AG04449 (cell line): ENCODE measurements at regions of chr2 and their contacts with region 1.

Region 1: GRCh38 chr2:217934321-217935131 is 68.3 kb downstream of the TNS1 start:
- DNase-seq: peak; percentile 89
- H3K4me3 ChIP-seq: peak overlapping the region; percentile 1
- CTCF ChIP-seq: no peak

Region 2: DNA sequence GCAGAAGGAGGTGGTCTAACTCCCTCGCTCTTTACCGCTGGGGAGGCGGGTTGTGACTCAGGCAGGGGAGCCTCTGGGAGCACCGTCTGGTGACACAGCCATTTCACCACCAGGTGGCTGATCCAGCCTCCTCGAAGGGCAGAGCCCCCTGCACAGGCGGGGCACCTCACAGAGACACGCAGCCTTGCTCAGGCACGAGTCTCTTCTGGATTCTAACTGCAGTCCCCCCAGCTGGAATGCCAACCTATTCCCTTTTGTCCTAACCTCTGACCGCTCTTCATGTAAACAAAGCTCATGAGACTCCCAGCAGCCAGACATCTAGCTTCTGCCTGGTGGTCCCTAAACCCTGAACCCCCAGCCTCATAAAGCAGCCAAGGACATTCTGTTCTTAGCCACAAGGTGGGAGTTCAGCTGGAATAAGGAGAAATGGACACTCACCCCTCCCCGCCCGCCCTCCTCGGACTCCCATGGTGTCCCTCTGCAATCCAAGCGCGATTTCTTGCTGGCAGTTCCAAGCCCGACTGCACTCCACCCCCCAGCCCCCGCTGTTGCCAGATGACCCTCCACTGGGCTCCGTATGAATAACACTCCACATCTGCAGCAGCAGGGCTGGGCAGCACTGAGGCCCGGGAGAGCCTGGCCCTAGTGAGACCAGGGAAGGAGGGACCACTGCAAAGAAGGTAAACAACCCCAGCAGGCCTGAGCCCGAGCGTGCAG is 16.1 kb before region 1 on chr2:
- CTCF ChIA-PET with region 1: interaction called, 36 read pairs
- POLR2A ChIA-PET with region 1: interaction called, 43 read pairs
- DNase-seq: no peak
- H3K4me3 ChIP-seq: no peak overlapping the region
- CTCF ChIP-seq: peak; percentile 34

Region 3: DNA sequence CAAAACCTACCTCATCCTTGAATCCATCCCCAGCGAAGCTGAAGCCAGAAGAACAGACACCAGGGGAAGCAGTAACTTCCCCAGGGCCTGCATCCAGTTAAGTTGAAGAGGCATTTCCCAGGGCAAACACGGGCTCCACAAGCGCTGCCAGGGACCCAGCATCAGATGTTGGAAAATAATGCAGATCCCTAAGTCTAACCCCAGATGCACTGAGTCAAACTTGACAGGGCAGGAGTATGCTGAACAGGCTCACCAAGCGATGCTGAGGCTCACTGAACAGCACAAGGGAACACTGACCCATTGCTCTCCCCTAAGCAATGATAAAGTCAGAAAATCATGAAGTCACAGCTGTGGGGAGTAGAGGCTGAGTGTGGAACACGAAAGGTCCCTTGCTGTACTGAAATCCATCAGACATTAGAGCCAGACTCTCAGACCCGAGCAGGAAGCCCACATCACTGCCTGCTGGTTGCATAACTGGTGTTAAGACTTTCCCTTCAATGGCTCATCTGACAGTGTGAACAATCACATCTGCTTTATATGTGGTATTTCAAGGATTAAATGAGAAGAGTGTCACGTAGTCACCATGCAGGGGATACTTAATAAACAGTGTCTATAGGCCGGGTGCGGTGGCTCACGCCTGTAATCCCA is 32.0 kb after region 1 on chr2:
- CTCF ChIA-PET with region 1: interaction called, 3 read pairs
- POLR2A ChIA-PET with region 1: interaction called, 14 read pairs
- DNase-seq: no peak
- H3K4me3 ChIP-seq: no peak overlapping the region
- CTCF ChIP-seq: no peak

Region 4: DNA sequence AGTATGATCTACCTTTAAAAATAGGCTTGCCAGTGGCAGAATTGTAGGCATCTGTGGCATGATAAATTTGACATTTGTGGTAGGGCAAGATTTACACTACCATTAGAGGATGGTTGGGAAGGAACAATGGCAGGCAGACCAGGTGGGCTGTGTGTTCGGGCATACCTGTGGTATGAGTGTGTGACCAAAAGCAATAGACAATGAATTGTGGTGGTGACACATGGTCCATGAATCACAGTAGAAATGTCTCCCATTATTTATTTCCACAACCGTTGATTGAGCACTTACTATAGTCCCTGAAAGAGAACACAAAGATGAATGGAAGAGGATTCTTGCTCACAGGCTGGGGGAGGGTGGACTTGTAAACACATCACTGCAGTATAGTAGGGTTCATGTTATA is 104.6 kb after region 1 on chr2:
- CTCF ChIA-PET with region 1: no interaction called
- POLR2A ChIA-PET with region 1: no interaction called
- DNase-seq: no peak
- H3K4me3 ChIP-seq: no peak overlapping the region
- CTCF ChIP-seq: no peak

Region 5: DNA sequence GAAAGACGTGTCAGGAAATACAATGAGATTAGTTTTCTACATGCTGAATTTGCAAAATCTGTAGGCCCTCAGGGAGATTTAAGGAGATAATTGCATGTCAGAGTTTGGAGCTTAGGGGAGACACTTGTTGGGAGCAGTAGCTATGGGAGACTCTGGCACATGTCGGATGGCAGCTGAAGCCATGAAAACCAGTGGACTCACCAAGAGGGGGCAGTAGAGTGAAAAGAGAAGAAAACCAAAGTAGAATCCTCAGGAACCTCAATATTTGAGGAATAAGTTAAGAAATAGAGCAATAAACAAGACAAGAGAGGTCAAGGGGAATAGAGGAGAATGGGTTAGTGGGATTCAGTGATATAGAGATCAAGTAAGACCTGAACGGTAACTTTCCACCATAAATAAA is 159.4 kb after region 1 on chr2:
- CTCF ChIA-PET with region 1: no interaction called
- POLR2A ChIA-PET with region 1: no interaction called
- DNase-seq: no peak
- H3K4me3 ChIP-seq: no peak overlapping the region
- CTCF ChIP-seq: no peak